Gastrocnemius medialis (tissue), 4 donors: ENCODE measurements at regions of chr4 and their contacts with region 1.

Region 1: GRCh38 chr4:87209696-87210095 is 10.7 kb downstream of the KLHL8 start:
- DNase-seq: peak in 1 of 2 donors; percentile 54
- ATAC-seq: peak in 1 of 2 donors; percentile 37
- H3K4me3 ChIP-seq: no peak overlapping the region
- H3K27ac ChIP-seq: peak overlapping the region in 1 of 4 donors; percentile 15
- H3K4me1 ChIP-seq: peaks cover 30 to 47% of the 10 kb centered on the region in 2 donors
- H3K27me3 ChIP-seq: no peaks in the 10 kb centered on the region
- CTCF ChIP-seq: no peak
- POLR2A ChIP-seq: no peak

Region 2: DNA sequence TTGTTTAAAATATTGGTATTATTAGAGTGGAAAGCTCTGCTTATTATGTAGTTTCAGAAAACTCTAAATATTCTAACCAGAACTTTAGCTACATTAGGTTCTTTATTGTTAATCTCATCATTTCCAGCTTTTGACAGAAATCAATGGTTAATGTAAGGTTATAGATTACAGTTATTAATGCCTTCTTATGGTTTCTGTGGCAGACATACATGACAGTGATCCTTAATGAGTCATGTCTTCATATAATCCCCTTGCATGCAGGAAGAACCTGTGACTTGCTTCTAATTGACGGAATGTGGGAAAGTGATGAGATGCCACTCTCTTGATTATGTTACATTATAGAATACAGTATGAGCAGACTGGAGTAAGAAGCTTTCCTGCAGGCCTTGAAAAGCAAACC is 12.8 kb before region 1 on chr4:
- in situ Hi-C with region 1: no loop called
- intact Hi-C with region 1: loop called (anchors 2 kb)
- DNase-seq: no peak
- ATAC-seq: no peak
- H3K4me3 ChIP-seq: no peak overlapping the region
- H3K27ac ChIP-seq: no peak overlapping the region
- H3K4me1 ChIP-seq: peaks cover 19 to 58% of the 10 kb centered on the region in 2 donors
- H3K27me3 ChIP-seq: no peaks in the 10 kb centered on the region
- CTCF ChIP-seq: no peak
- POLR2A ChIP-seq: no peak